GM13976 (cell line): ENCODE measurements at regions of chr2 and their contacts with region 1.

Region 1: GRCh38 chr2:207746131-207746530 is 23.6 kb downstream of the FZD5 start:
- DNase-seq: peak; percentile 65
- CTCF ChIP-seq: peak; percentile 82

Region 2: GRCh38 chr2:207565736-207566500 is 180.2 kb before region 1 on chr2:
- in situ Hi-C with region 1: no loop called
- DNase-seq: no peak
- CTCF ChIP-seq: no peak

Region 3: GRCh38 chr2:207974216-207974605 is 228.1 kb after region 1 on chr2:
- in situ Hi-C with region 1: loop called (anchors 5 kb)
- DNase-seq: no peak
- CTCF ChIP-seq: no peak

Region 4: DNA sequence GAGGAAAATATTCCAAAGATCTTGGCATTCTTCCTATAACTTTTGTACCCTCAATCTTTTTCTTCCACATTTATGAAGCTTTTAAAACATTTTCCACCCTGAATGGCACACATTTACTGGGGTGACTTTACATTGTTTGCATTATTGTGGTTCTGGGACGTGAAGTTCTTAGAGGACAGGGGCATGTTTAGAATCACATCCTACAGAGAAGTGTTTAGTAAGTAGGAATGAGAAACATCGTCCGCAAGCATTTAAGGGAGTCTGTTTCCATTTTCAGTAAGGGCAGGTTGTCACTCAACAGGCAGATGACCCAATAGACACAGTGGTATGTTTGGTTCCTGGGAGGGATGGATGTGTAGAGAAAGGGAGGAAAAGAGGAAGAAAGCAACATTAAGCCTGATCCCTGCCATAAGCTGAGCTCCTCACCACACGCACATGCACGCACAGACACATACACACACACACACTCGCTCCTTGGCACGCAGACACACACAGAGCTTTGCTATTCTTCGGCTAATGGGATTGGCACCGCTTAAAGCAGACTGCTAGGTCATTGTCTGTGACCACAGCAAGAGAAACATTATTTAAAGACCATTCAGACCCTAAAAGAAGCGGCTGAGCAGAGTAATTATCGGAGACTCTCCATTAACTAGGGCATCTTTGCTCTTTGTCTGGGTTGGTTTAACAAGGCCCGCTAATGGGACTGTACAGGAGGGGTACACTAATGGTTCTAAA is 293.4 kb after region 1 on chr2:
- in situ Hi-C with region 1: loop called (anchors 5 kb)
- DNase-seq: no peak
- CTCF ChIP-seq: no peak

Region 5: GRCh38 chr2:208062113-208062512 is 316.0 kb after region 1 on chr2:
- in situ Hi-C with region 1: loop called (anchors 10 kb)
- DNase-seq: no peak
- CTCF ChIP-seq: no peak